Activated CD4-positive, alpha-beta memory T cell treated with anti-CD3 and anti-CD28 coated beads for 36 hours (primary cell): ENCODE measurements at regions of chr3 and their contacts with region 1.

Region 1: GRCh38 chr3:172685346-172686214 is 25.3 kb downstream of the NCEH1 start:
- DNase-seq: peak; percentile 13
- H3K4me3 Mint-ChIP-seq: no peak overlapping the region
- H3K27ac Mint-ChIP-seq: peak overlapping the region; percentile 55
- H3K4me1 Mint-ChIP-seq: peaks cover 9% of the 10 kb centered on the region
- H3K27me3 Mint-ChIP-seq: no peaks in the 10 kb centered on the region

Region 2: DNA sequence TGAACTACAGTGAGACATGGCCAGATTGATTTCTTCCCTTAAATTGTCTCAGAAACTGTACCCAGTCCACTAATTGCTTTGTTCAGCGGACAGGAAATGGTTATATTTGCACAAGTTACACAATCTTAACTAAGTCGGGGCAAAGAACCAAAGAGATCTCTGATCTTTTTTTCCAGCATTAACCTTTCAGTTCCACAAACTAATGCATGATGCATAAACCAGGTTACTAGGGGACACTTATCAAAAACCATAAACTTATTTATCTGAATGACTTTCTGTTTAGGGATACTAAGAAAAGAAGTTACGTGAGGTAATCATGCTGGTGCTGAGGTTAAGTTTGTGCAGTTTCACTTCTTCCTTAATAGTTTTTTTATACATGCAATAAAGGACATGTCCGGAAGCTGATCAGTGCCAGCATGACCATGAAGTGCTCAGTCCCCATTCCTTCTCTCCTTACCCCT is 623.8 kb before region 1 on chr3:
- CTCF ChIA-PET with region 1: no interaction called
- POLR2A ChIA-PET with region 1: no interaction called
- intact Hi-C with region 1: no loop called
- DNase-seq: no peak
- H3K4me3 Mint-ChIP-seq: no peak overlapping the region
- H3K27ac Mint-ChIP-seq: no peak overlapping the region
- H3K4me1 Mint-ChIP-seq: peaks cover 22% of the 10 kb centered on the region
- H3K27me3 Mint-ChIP-seq: no peaks in the 10 kb centered on the region

Region 3: DNA sequence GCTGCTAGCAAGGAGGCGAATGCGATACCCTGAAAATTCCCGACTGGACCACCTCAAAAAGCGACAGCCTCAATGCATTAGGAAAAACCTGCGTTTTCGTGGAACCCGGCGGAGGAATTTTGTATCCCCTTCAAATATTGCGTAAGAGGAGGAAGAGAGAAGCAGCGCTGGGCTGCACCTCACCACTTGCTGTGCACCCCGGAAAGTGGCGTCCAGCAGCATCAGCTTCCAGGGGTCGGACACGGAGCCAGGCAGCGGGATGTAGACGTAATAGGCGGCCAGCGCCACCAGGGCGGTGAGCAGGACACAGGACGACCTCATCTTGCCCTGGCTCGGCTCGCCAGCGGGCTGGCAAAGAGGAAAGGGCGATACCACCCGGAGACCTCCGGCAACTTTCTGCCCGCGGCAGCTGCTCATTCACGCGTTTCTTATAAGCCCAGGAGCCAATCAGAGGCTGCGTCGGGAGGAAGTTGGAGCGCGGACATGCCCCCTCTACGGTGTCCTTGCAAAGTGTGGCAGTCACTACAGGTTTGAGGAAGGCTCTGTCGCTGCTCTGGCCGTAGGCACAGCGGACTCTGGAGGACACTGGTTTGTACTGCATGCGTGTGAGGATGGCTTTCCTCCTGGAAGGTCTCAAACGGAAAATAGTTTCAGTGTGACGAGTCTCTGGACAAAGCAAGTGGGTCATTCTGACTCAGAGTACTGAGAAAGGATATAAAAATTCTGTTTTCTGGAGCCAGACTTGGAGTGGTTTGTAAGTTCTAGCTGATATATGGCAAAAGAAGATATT is 25.3 kb after region 1 on chr3 and contains the start of gene NCEH1:
- CTCF ChIA-PET with region 1: interaction called, 4 read pairs
- POLR2A ChIA-PET with region 1: interaction called, 4 read pairs
- intact Hi-C with region 1: loop called (anchors 1 kb)
- DNase-seq: peak; percentile 87
- H3K4me3 Mint-ChIP-seq: peak within 1 kb of the TSS; percentile 91
- H3K27ac Mint-ChIP-seq: peak within 1 kb of the TSS; percentile 16
- H3K4me1 Mint-ChIP-seq: peaks cover 19% of the 10 kb centered on the region
- H3K27me3 Mint-ChIP-seq: no peaks in the 10 kb centered on the region
- total RNA-seq, gene NCEH1: 4.6 to 5.2 TPM

Region 4: GRCh38 chr3:172859041-172859440 is 173.5 kb after region 1 on chr3:
- CTCF ChIA-PET with region 1: no interaction called
- POLR2A ChIA-PET with region 1: no interaction called
- intact Hi-C with region 1: no loop called
- DNase-seq: no peak
- H3K4me3 Mint-ChIP-seq: no peak overlapping the region
- H3K27ac Mint-ChIP-seq: no peak overlapping the region
- H3K4me1 Mint-ChIP-seq: no peaks in the 10 kb centered on the region
- H3K27me3 Mint-ChIP-seq: peaks cover 4% of the 10 kb centered on the region